T-cell (primary cell): ENCODE measurements at regions of chr6 and their contacts with region 1.

Region 1: GRCh38 chr6:139577763-139578604 is 203.5 kb upstream of the CITED2 start:
- DNase-seq: no peak
- ATAC-seq: no peak
- H3K4me3 ChIP-seq: no peak overlapping the region
- H3K4me3 Mint-ChIP-seq: no peak overlapping the region
- H3K27ac ChIP-seq: no peak overlapping the region
- H3K27ac Mint-ChIP-seq: no peak overlapping the region
- H3K4me1 ChIP-seq: peaks cover 2 to 5% of the 10 kb centered on the region in 2 experiments
- H3K4me1 Mint-ChIP-seq: peaks cover 16 to 18% (median 17%) of the 10 kb centered on the region in 3 donors
- H3K27me3 ChIP-seq: no peaks in the 10 kb centered on the region
- H3K27me3 Mint-ChIP-seq: peaks cover 0 to 4% of the 10 kb centered on the region in 2 donors

Region 2: GRCh38 chr6:139508023-139508422 is 70.0 kb before region 1 on chr6:
- CTCF ChIA-PET with region 1: no interaction called
- POLR2A ChIA-PET with region 1: no interaction called
- DNase-seq: no peak
- ATAC-seq: no peak
- H3K4me3 ChIP-seq: no peak overlapping the region
- H3K4me3 Mint-ChIP-seq: no peak overlapping the region
- H3K27ac ChIP-seq: no peak overlapping the region
- H3K27ac Mint-ChIP-seq: no peak overlapping the region
- H3K4me1 ChIP-seq: no peaks in the 10 kb centered on the region
- H3K4me1 Mint-ChIP-seq: no peaks in the 10 kb centered on the region
- H3K27me3 ChIP-seq: no peaks in the 10 kb centered on the region
- H3K27me3 Mint-ChIP-seq: no peaks in the 10 kb centered on the region

Region 3: DNA sequence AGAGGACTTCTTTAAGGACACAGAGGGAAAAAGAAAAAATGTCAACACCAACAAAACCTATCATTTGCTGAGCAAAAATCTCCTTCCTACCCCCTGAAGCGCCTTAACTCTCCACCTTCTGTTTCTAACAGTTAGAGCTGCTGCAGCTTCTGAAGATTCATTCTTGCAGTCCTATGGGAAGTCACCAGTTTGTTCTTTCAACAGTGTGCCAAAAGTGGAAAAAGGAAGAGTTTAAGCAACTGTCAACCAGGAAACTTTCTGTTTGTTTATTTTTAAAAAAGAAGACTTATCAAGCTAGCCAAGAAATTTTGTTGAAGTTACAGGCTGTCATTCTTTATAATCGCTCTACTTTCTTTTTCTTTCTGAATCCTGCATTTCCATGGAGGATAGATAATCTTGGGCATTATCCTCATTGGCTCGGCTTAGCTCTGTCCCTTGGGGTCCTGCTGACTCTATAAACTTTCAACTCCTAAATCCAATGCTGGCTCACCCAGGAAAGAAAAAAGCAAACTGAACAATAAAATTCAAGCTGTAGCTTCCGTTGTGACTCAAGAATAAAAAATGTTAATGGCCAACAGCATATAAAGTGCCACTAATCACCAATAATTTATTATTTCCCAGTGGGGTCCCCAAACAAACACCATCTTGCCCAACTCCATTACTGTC is 30.7 kb before region 1 on chr6:
- CTCF ChIA-PET with region 1: no interaction called
- POLR2A ChIA-PET with region 1: interaction called in 1 of 2 experiments, 13 read pairs
- DNase-seq: no peak
- ATAC-seq: no peak
- H3K4me3 ChIP-seq: no peak overlapping the region
- H3K4me3 Mint-ChIP-seq: no peak overlapping the region
- H3K27ac ChIP-seq: no peak overlapping the region
- H3K27ac Mint-ChIP-seq: no peak overlapping the region
- H3K4me1 ChIP-seq: no peaks in the 10 kb centered on the region
- H3K4me1 Mint-ChIP-seq: peaks cover 0 to 26% (median 16%) of the 10 kb centered on the region in 3 donors
- H3K27me3 ChIP-seq: no peaks in the 10 kb centered on the region
- H3K27me3 Mint-ChIP-seq: peaks cover 0 to 4% of the 10 kb centered on the region in 2 donors